Natural killer cell (primary cell): ENCODE measurements at regions of chr22 and their contacts with region 1.

Region 1: DNA sequence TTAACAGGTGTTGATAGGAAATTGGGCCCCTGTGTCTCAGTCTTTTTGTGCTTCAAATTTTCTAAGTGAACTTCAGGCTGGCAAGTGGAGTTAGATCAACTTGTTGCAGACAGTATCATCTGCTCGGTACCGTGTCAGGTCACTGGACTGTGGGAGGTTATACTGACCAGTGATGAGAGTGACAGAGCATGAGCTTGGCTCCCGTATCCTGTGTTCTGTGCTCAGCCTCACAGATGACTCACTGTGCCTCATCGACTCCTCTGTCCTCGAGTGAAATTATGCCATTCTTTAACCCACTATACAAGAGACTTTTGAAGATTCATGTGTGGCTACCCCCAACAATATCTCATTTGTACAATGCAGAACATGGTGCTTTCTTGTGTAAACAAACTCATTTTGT is 7.9 kb downstream of the GRAP2 start:
- DNase-seq: peak in 1 of 2 donors; percentile 65
- ATAC-seq: peak; percentile 62 to 73 (median 69)
- H3K4me3 ChIP-seq: no peak overlapping the region
- H3K4me3 Mint-ChIP-seq: peak overlapping the region; percentile 61
- H3K27ac ChIP-seq: peak overlapping the region; percentile 45
- H3K27ac Mint-ChIP-seq: peak overlapping the region; percentile 78 to 92
- H3K4me1 ChIP-seq: peaks cover 62% of the 10 kb centered on the region
- H3K4me1 Mint-ChIP-seq: peaks cover 91 to 97% of the 10 kb centered on the region in 2 donors
- H3K27me3 ChIP-seq: no peaks in the 10 kb centered on the region
- H3K27me3 Mint-ChIP-seq: no peaks in the 10 kb centered on the region
- CTCF ChIP-seq: no peak

Region 2: GRCh38 chr22:39877079-39877845 is 31.5 kb before region 1 on chr22:
- intact Hi-C with region 1: no loop called
- DNase-seq: no peak
- ATAC-seq: no peak
- H3K4me3 ChIP-seq: no peak overlapping the region
- H3K4me3 Mint-ChIP-seq: no peak overlapping the region
- H3K27ac ChIP-seq: no peak overlapping the region
- H3K27ac Mint-ChIP-seq: no peak overlapping the region
- H3K4me1 ChIP-seq: no peaks in the 10 kb centered on the region
- H3K4me1 Mint-ChIP-seq: no peaks in the 10 kb centered on the region
- H3K27me3 ChIP-seq: no peaks in the 10 kb centered on the region
- H3K27me3 Mint-ChIP-seq: peaks cover 0 to 7% of the 10 kb centered on the region in 2 donors
- CTCF ChIP-seq: no peak

Region 3: DNA sequence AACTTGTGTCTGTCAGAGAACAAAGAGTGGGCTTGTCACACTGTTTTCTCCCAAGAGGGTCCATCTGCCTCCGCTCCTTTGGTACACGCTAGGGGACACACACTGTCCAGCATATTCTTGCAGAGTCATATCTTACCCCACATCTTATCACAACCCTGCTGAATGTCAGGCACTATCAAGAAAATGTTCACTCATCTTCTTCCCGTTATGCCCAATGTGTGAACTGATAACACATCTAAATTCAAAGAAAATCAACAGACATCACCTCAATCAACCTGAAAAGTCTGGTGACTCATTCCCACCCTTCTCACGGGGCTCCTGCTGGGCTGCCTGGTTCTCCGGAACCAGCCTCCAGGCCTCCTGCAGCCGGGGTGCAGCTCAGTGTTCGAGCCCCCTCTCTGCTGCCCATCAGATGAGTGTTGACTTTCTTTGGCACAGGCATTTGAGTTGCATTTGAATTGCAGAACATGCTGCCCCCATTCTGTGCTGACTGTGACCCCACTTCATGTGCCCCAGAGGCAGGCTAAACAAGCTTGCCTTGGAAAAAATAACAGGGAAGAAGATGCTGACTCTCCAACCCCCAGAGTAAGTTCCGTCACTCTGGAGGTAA is 11.5 kb after region 1 on chr22:
- intact Hi-C with region 1: loop called (anchors 2 kb)
- DNase-seq: peak in 1 of 2 donors; percentile 70
- ATAC-seq: peak; percentile 51 to 84 (median 71)
- H3K4me3 ChIP-seq: no peak overlapping the region
- H3K4me3 Mint-ChIP-seq: peak overlapping the region; percentile 92
- H3K27ac ChIP-seq: peak overlapping the region; percentile 53
- H3K27ac Mint-ChIP-seq: peak overlapping the region; percentile 88 to 91
- H3K4me1 ChIP-seq: peaks cover 45% of the 10 kb centered on the region
- H3K4me1 Mint-ChIP-seq: peaks cover 78 to 79% of the 10 kb centered on the region in 2 donors
- H3K27me3 ChIP-seq: no peaks in the 10 kb centered on the region
- H3K27me3 Mint-ChIP-seq: no peaks in the 10 kb centered on the region
- CTCF ChIP-seq: no peak

Region 4: DNA sequence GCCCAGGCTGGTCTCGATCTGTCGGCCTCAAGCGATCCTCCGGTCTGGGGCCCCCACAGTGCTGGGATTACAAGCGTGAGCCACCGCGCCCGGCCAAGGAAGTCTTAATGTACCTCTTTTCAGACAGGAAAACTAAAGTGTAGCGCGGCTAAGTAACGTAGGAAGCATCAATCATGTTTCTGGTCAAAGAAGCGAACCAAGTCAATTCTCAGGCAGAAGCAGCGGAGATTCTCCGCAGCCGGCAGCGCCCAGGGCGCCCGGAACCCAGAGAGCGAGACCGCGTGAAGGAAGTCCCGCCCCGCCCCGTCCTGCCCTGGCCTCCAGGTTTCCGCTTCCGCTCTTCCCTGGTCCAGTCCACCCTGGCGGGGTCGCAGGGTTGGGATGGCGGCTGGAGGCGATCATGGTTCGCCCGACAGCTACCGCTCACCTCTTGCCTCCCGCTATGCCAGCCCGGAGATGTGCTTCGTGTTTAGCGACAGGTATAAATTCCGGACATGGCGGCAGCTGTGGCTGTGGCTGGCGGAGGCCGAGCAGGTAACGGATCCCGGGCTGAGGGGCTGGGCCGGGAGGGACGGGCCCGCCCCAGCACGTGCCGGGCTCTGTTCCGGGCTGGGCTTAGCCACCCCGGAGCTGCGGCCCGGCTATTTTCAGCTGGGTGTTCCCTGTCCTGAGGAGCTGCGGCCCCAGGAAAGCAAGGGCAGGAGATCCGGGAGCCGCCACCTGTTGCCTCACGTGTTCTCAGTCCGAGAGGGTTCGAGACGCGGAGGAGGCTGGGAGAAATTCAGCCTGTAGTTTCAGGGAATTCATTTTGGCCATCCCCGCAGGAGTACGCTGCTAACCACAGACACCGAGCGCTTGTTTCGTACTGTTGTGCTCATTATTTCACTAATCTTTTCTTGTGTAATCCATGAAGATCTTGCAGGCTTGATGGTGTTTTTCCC is 437.7 kb after region 1 on chr22 and contains the start of gene ADSL:
- intact Hi-C with region 1: no loop called
- DNase-seq: peak; percentile 74 to 90
- ATAC-seq: peak; percentile 89 to 93 (median 91)
- H3K4me3 ChIP-seq: peak within 1 kb of the TSS; percentile 76
- H3K4me3 Mint-ChIP-seq: peak within 1 kb of the TSS; percentile 98
- H3K27ac ChIP-seq: peak within 1 kb of the TSS; percentile 65
- H3K27ac Mint-ChIP-seq: peak within 1 kb of the TSS; percentile 89
- H3K4me1 ChIP-seq: peaks cover 25% of the 10 kb centered on the region
- H3K4me1 Mint-ChIP-seq: peaks cover 23 to 29% of the 10 kb centered on the region in 2 donors
- H3K27me3 ChIP-seq: no peaks in the 10 kb centered on the region
- H3K27me3 Mint-ChIP-seq: no peaks in the 10 kb centered on the region
- CTCF ChIP-seq: no peak
- total RNA-seq, gene ADSL: 31.3 to 49.8 (median 41.2) TPM